H1 (cell line): ENCODE measurements at regions of chr7 and their contacts with region 1.

Region 1: GRCh38 chr7:27921081-27921836 is 181.3 kb downstream of the TAX1BP1 start:
- DNase-seq: peak in 1 of 2 experiments; percentile 41
- H3K4me3 ChIP-seq: no peak overlapping the region
- H3K27ac ChIP-seq: no peak overlapping the region
- H3K4me1 ChIP-seq: peaks cover 0 to 10% (median 7%) of the 10 kb centered on the region in 4 experiments; a peak in 5 of 7 replicates
- H3K27me3 ChIP-seq: no peaks in the 10 kb centered on the region
- CTCF ChIP-seq: peak in 2 of 3 experiments; percentile 37 to 40; a peak in 2 of 4 replicates
- EP300 ChIP-seq: no peak
- POLR2A ChIP-seq: no peak
- RAD21 ChIP-seq: peak; percentile 77 to 82

Region 2: GRCh38 chr7:27910326-27910725 is 10.9 kb before region 1 on chr7:
- CTCF ChIA-PET with region 1: interaction called, 28 read pairs
- POLR2A ChIA-PET with region 1: interaction called, 6 read pairs
- DNase-seq: peak in 1 of 2 experiments; percentile 61
- H3K4me3 ChIP-seq: peak overlapping the region in 3 of 4 experiments; percentile 9 to 46 (median 20); a peak in 4 of 8 replicates
- H3K27ac ChIP-seq: peak overlapping the region; percentile 55; the same call in 1 of the 2 replicates
- H3K4me1 ChIP-seq: peaks cover 18 to 41% (median 31%) of the 10 kb centered on the region in 4 experiments
- H3K27me3 ChIP-seq: no peaks in the 10 kb centered on the region
- CTCF ChIP-seq: no peak
- EP300 ChIP-seq: peak in 1 of 2 experiments; percentile 72; a peak in 1 of 3 replicates
- POLR2A ChIP-seq: no peak
- RAD21 ChIP-seq: no peak

Region 3: DNA sequence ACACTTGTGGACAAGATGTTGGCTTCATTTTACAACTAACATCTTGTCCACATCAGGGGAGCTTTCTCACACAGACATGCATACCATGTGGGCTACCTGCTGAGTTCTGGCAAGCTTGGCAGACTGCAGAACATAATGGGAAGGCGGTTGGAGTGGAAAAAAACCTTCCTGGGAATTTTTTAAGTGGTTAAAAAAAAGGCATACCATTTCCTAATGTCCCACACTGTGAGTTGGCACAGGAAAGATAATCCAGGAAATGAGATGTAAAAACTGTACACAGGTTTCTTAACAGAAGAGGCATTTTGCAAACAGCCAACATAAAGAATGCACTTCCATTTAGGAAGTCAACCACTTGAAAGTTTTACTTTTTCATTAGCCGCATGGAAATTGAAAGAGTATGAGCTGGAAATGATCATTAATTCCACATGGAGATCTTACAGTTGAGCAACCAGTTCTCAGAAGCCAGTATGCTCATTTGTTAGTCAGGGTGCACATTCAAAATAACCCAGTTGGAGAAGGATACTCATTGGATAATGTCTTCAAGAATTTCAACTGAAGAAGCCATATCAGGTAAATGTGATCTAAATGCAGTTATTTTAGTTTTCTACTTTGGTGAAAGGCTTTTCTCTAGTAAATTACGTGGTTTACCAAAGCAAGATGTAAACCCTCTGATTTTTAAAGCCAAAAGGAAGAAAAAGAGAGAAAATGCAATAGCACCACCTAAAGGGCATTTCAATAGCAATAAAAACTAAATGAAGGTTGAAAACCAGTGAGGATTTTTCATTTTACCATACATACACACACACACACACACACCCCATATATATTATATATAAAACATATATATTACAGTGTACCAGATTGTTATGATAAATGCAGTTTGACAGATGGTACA is 12.7 kb after region 1 on chr7:
- CTCF ChIA-PET with region 1: interaction called, 50 read pairs
- POLR2A ChIA-PET with region 1: no interaction called
- DNase-seq: no peak
- H3K4me3 ChIP-seq: no peak overlapping the region; a peak in 1 of 8 replicates
- H3K27ac ChIP-seq: no peak overlapping the region
- H3K4me1 ChIP-seq: peaks cover 0 to 8% (median 5%) of the 10 kb centered on the region in 4 experiments; a peak in 5 of 7 replicates
- H3K27me3 ChIP-seq: no peaks in the 10 kb centered on the region
- CTCF ChIP-seq: peak in 2 of 3 experiments; percentile 9 to 48; a peak in 2 of 4 replicates
- EP300 ChIP-seq: no peak
- POLR2A ChIP-seq: no peak
- RAD21 ChIP-seq: peak; percentile 44 to 52; a peak in 3 of 4 replicates

Region 4: GRCh38 chr7:27952456-27953285 is 31.4 kb after region 1 on chr7:
- CTCF ChIA-PET with region 1: no interaction called
- POLR2A ChIA-PET with region 1: no interaction called
- DNase-seq: no peak
- H3K4me3 ChIP-seq: no peak overlapping the region
- H3K27ac ChIP-seq: no peak overlapping the region
- H3K4me1 ChIP-seq: no peaks in the 10 kb centered on the region
- H3K27me3 ChIP-seq: no peaks in the 10 kb centered on the region
- CTCF ChIP-seq: no peak
- EP300 ChIP-seq: no peak
- POLR2A ChIP-seq: no peak
- RAD21 ChIP-seq: no peak

Region 5: GRCh38 chr7:28020302-28020940 is 99.2 kb after region 1 on chr7:
- CTCF ChIA-PET with region 1: interaction called, 14 read pairs
- POLR2A ChIA-PET with region 1: no interaction called
- DNase-seq: peak; percentile 43 to 68
- H3K4me3 ChIP-seq: no peak overlapping the region
- H3K27ac ChIP-seq: no peak overlapping the region
- H3K4me1 ChIP-seq: peaks cover 0 to 3% (median 2%) of the 10 kb centered on the region in 4 experiments; a peak in 4 of 7 replicates
- H3K27me3 ChIP-seq: no peaks in the 10 kb centered on the region
- CTCF ChIP-seq: peak; percentile 55 to 98 (median 93)
- EP300 ChIP-seq: no peak
- POLR2A ChIP-seq: no peak
- RAD21 ChIP-seq: peak; percentile 98 to 99

Region 6: GRCh38 chr7:28222636-28223035 is 301.4 kb after region 1 on chr7:
- CTCF ChIA-PET with region 1: no interaction called
- POLR2A ChIA-PET with region 1: no interaction called
- DNase-seq: no peak
- H3K4me3 ChIP-seq: no peak overlapping the region
- H3K27ac ChIP-seq: no peak overlapping the region
- H3K4me1 ChIP-seq: peaks cover 5 to 14% (median 10%) of the 10 kb centered on the region in 4 experiments; a peak in 5 of 7 replicates
- H3K27me3 ChIP-seq: no peaks in the 10 kb centered on the region
- CTCF ChIP-seq: no peak
- EP300 ChIP-seq: no peak
- POLR2A ChIP-seq: no peak
- RAD21 ChIP-seq: no peak